Transverse colon (tissue), 4 donors: ENCODE measurements at regions of chr7 and their contacts with region 1.

Region 1: DNA sequence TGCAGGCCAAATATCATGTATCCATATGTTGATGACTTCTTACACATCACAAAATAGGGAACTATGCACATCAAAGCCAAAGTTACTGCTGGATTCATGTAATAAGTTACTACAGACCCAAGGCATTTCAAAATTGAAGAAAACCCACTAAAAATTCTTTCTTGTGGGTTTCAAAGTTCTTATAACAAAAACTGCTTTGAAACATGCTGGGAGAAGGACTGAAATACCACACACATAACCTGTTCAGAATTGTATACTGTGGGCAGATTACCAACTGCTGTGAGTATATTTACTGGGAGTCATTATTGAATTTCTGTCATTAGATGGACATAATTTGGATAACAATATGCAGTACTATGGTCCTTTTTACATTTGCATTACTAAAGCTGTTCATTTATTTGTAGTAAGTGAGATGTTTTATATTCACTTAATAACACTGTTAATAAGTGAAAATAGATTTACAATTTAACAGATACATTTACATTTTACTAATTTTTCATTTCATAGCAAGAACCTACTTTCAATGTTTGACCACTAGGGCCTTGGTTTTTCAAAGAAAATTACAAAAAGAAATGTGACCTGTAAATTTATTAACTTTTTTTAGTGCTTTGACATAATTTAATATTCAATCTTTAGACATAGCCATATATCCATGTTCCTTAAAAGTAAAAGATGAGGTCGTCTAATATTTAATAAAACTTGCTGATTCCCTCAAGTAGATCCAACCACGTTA is 132.6 kb downstream of the MAGI2 start:
- DNase-seq: no peak
- H3K4me3 ChIP-seq: no peak overlapping the region
- H3K27ac ChIP-seq: no peak overlapping the region
- H3K4me1 ChIP-seq: no peaks in the 10 kb centered on the region
- H3K27me3 ChIP-seq: no peaks in the 10 kb centered on the region
- CTCF ChIP-seq: no peak
- EP300 ChIP-seq: no peak
- POLR2A ChIP-seq: no peak

Region 2: DNA sequence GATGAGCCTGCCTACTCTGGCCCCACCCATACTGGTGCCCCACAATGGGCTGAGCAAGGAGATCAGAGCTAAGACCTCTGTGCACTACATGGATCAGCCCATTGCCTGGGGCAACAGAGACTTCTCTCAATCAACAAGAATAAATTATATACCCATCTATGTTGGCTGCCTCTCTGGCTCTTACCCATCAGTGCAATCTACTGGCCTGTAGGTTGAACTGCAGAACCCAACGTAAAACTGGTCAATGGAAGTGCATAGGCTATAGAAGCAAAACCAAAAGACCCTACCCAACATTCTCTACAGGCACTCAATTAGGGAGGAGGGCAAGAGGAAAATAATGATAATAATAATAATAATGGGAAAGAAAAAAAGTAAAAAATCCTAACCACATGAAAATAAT is 441.7 kb before region 1 on chr7:
- in situ Hi-C with region 1: no loop called
- intact Hi-C with region 1: loop called (anchors 5 kb)
- DNase-seq: no peak
- H3K4me3 ChIP-seq: no peak overlapping the region
- H3K27ac ChIP-seq: no peak overlapping the region
- H3K4me1 ChIP-seq: no peaks in the 10 kb centered on the region
- H3K27me3 ChIP-seq: no peaks in the 10 kb centered on the region
- CTCF ChIP-seq: no peak
- EP300 ChIP-seq: no peak
- POLR2A ChIP-seq: no peak